ENCODE measurements at regions of chr2 and their contacts with region 1.

Region 1: DNA sequence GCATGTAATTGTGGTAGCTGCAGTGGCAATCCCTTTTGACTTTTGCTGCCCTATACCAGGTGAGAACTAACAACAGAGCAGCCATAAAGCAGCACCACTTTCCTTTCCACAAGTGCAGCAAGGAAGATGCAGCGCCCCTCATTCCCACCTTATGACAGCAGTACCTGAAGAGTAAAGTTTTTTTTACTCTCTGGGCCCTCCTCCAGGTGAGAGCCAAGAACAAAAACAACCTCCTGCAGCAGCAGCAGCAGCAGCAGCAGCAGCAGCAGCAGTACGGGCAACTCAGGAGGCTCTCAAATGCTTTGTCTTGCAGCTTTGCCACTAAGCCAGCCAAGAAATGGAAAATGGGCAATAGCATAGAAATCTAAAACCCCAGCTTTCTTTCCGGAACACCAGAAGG is 397.5 kb downstream of the FIGN start:
- DNase-seq: no peak
- ATAC-seq: no peak
- H3K4me3 ChIP-seq: no peak overlapping the region
- H3K27ac ChIP-seq: no peak overlapping the region
- H3K4me1 ChIP-seq: no peaks in the 10 kb centered on the region
- H3K27me3 ChIP-seq: no peaks in the 10 kb centered on the region
- CTCF ChIP-seq: no peak

Region 2: DNA sequence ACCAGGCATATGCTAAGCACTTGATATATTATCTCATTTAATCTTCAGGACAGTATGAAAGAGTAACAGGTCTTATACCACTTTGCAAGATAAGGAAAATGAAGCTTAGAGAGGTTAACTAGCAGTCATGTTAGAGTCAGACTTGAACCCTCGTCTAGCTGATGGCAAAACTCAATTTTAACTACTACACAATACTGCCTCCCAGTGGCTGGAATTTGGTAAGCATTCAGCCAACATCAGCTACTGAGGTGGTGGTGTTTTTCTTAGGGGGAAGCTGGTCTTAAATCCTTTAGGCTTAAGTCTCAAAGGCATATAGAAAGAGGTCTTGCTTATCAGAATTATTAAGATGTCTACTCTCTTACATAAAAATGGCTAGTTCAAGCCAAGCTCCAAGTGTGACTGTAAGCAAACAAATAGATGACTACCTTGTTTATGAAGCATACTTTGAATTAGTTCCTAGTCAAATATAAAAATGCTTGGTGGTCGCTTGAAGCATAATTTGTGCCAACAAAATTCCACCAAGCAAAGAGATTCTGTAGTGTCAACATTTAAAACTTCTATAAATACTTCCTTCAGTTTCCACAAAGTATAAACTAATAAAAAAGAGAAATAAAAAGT is 723.0 kb after region 1 on chr2:
- intact Hi-C with region 1: loop called in 1 of 3 experiments (anchors 10 kb)
- DNase-seq: peak in 3 of 6 donors; percentile 7 to 45 (median 14)
- ATAC-seq: peak in 3 of 4 donors; percentile 61 to 68 (median 63)
- H3K4me3 ChIP-seq: no peak overlapping the region
- H3K27ac ChIP-seq: no peak overlapping the region
- H3K4me1 ChIP-seq: no peaks in the 10 kb centered on the region
- H3K27me3 ChIP-seq: no peaks in the 10 kb centered on the region
- CTCF ChIP-seq: peak; percentile 36 to 61 (median 54)

Measured in pancreas (tissue), 10 donors.